Endothelial cell of umbilical vein (primary cell): ENCODE measurements at regions of chr3 and their contacts with region 1.

Region 1: DNA sequence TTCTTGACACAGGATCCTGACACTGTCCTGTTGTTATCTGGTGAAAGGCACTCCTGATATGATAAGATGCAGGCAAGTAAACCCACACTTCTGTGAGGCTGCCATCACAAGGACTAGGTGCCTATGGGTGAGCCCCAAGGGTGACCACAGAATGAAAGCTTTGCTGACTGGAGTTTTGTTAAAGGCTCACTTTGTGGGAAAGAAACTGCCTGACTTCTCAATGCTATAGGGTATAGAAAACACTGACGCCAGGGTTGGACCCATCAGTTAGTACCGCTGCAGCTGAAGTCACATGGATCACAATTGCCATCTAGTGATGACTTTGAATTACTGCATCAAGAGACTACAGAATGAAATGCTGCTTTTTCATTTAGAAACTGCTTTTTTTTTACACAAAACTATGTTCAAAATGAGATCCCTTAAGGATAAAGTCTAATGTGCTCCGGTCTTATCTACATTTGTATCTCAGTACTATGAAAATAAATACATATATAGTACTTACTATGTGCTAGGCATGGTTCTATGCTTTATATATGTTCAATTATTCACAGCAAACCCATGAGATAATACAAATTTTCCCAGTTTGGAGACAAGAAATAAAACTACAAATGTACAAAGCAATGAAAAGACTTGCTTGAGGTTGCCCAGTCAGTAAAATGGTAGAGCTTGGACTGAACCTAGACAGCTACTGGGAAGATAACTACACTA is 64.2 kb upstream of the CMSS1 start:
- DNase-seq: peak; percentile 77
- H3K4me3 ChIP-seq: no peak overlapping the region
- H3K27ac ChIP-seq: peak overlapping the region; percentile 21
- H3K4me1 ChIP-seq: peaks cover 28% of the 10 kb centered on the region
- H3K27me3 ChIP-seq: no peaks in the 10 kb centered on the region
- CTCF ChIP-seq: peak; percentile 56 to 58
- POLR2A ChIP-seq: no peak

Region 2: GRCh38 chr3:99699841-99700240 is 53.6 kb before region 1 on chr3:
- CTCF ChIA-PET with region 1: interaction called, 3 read pairs
- POLR2A ChIA-PET with region 1: no interaction called
- dilution Hi-C with region 1: no loop called
- intact Hi-C with region 1: loop called (anchors 5 kb)
- DNase-seq: peak; percentile 83
- H3K4me3 ChIP-seq: no peak overlapping the region
- H3K27ac ChIP-seq: peak overlapping the region; percentile 89
- H3K4me1 ChIP-seq: peaks cover 32% of the 10 kb centered on the region
- H3K27me3 ChIP-seq: no peaks in the 10 kb centered on the region
- CTCF ChIP-seq: no peak
- POLR2A ChIP-seq: no peak

Region 3: DNA sequence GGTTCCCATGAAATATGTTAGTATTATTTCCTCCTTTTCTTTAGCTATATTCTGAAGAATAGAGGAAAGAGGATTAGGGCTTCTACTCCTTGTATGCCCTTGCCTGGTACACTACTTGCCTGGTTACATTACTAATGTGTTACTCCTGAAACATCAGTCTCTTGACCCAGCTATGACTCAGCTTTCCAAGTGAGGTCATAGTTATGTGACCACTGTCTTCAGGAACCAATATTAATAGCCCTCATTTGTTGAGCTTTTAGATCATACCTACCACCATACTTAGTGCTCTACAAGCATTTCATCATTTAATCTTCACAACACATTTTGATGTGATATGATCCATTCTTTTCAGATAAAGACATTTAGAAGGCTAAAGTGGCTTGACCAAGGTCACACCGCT is 124.6 kb after region 1 on chr3:
- CTCF ChIA-PET with region 1: no interaction called
- POLR2A ChIA-PET with region 1: no interaction called
- dilution Hi-C with region 1: no loop called
- intact Hi-C with region 1: no loop called
- DNase-seq: peak; percentile 78
- H3K4me3 ChIP-seq: no peak overlapping the region
- H3K27ac ChIP-seq: peak overlapping the region; percentile 10
- H3K4me1 ChIP-seq: peaks cover 41% of the 10 kb centered on the region
- H3K27me3 ChIP-seq: no peaks in the 10 kb centered on the region
- CTCF ChIP-seq: no peak
- POLR2A ChIP-seq: no peak